ENCODE measurements at regions of chr6 and their contacts with region 1.

Region 1: DNA sequence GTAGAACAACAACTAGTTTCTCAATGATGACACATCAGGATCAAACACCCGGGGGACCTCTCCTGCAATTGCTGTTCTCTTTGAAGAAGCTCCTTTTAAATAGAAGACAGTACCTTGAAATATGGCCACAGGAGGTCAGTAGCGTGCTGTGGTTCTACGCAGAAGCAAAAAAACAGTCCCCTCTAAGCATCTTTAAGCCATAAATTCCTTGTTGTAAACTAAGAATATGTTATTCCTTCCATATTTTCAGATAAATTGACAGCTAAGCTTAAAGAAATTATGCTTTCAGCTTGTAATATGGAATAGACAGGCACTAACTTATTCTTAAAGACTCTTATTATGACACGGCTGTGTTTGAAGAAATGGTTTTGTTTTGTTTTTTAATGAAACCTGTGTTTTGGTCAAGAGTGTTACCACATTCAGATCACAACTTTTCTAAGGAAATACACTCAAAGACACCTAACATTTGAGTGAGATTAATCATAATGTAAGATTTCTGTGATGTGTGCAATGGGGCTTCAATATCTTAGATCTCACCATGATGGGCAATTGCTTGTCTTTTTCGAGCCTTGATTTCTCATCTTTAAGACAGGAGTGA is 49.7 kb upstream of the IL20RA start:
- DNase-seq: peak; percentile 38
- H3K4me3 Mint-ChIP-seq: no peak overlapping the region
- H3K27ac Mint-ChIP-seq: no peak overlapping the region
- H3K4me1 Mint-ChIP-seq: peaks cover 57% of the 10 kb centered on the region
- H3K27me3 Mint-ChIP-seq: no peaks in the 10 kb centered on the region

Region 2: GRCh38 chr6:137033828-137034227 is 60.7 kb before region 1 on chr6:
- intact Hi-C with region 1: loop called (anchors 2 kb)
- DNase-seq: peak; percentile 61
- H3K4me3 Mint-ChIP-seq: no peak overlapping the region
- H3K27ac Mint-ChIP-seq: peak overlapping the region; percentile 20
- H3K4me1 Mint-ChIP-seq: peaks cover 19% of the 10 kb centered on the region
- H3K27me3 Mint-ChIP-seq: peaks cover 54% of the 10 kb centered on the region

Region 3: DNA sequence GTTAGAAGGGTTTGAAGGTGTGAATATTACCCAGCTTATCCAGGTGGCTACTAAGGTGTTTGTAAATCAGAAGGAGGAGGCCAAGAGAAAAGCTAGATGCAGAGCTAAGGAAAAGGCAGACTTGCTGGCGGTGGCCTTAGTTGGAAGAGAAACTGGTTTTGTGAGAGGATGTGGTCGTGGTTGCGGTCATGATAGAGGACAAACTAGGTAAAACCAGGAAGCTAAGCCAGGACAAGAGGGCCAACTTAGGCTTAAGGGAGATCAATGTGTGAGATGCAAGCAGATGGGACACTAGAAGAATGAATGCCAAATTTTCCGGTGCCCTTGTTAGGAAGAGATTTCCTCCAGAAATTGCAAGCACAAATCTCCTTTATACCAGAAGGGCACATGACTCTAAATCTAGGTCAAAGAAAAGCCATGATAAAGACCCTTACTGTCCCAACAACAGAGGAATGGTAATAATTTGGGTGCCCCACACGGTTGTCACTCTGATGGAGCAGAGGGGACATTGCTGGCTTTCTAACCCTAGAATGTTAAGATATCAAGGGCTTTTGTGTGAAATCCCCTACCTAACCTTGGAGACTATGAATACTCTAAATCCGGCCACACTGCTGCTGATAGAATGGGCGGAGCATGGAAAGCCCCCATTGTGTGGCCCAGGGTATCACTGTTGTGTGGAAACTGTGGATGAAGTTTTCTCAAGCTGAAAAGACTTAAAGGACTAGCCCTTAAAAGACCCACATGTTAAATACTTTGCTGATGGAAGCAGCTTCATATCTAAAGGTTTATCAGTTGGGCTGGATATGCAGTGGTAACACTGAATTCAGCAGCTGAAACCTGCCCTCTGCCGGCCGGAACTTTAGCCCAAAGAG is 71.1 kb after region 1 on chr6:
- intact Hi-C with region 1: loop called (anchors 1 kb)
- DNase-seq: peak; percentile 59
- H3K4me3 Mint-ChIP-seq: peak overlapping the region; percentile 30
- H3K27ac Mint-ChIP-seq: peak overlapping the region; percentile 64
- H3K4me1 Mint-ChIP-seq: peaks cover 59% of the 10 kb centered on the region
- H3K27me3 Mint-ChIP-seq: no peaks in the 10 kb centered on the region

Region 4: DNA sequence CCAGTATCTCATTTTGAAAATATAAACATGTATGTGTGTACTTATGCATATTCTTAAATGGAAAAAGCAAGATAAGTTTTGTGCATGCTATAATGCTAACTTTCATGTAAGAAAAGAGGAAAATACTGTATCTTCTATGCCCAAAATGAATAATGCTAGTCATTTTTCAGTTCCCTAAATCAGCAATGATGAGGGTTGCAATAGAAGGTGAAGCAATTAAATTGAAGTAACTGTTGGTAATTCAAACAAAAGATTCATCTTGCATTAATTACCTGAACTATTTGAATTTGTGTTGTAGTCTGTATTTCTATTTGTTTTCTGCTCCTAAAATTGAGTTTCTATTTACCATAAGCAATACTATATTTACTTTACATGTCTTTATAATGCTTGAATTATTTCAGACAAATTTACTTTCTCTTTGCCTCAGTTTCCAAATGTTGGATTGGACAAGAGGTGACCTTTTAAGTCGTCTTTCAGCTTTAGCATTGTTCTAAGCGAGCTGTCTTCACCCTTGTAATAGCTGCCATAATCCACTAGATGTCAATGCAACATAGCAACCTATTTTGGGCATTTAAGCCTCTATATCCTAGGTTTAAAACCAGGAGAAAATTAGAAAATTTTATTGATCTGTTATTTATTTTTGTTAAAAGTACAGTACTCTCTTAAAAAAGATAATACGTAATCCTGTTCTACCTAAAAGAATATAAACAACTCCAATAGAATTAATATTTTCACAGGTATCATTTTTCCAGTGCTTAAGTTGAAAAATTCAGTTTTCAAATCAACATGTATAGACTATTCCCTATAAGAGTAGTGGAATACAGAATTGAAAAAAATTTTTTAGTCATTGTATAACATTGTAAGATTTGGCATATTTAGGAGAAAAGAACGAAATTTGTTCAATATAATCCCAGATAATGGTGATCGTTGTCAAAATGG is 177.0 kb after region 1 on chr6:
- intact Hi-C with region 1: loop called (anchors 1 kb)
- DNase-seq: no peak
- H3K4me3 Mint-ChIP-seq: no peak overlapping the region
- H3K27ac Mint-ChIP-seq: no peak overlapping the region
- H3K4me1 Mint-ChIP-seq: peaks cover 13% of the 10 kb centered on the region
- H3K27me3 Mint-ChIP-seq: peaks cover 31% of the 10 kb centered on the region

Region 5: DNA sequence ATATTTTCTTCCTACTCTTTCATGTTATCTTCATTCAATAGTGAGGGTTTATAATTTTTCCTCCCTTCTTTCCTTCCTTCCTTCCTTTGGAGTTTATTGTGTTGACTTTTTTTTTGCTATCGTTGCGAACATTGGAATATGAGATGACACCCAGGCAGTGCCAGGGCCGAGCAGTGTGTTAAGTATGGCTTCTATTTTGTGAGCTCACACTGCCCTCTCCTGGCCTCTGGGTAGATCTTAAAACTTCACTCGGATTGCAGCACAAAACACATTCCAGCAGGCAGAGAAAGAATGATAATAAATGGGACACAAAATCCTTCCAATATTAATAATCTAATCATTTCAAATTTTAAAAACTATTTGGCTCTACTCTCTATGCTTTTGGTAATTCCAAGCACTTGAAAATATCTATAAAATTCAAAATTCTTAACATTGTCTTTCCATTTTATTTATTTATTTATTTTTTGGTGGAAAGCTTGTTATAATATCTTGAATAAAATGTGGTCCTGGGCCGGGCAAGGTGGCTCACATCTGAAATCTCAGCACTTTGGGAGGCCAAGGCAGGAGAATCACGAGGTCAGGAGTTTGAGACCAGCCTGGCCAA is 547.1 kb after region 1 on chr6:
- intact Hi-C with region 1: loop called (anchors 1 kb)
- DNase-seq: peak; percentile 49
- H3K4me3 Mint-ChIP-seq: no peak overlapping the region
- H3K27ac Mint-ChIP-seq: no peak overlapping the region
- H3K4me1 Mint-ChIP-seq: peaks cover 21% of the 10 kb centered on the region
- H3K27me3 Mint-ChIP-seq: peaks cover 3% of the 10 kb centered on the region

Region 6: GRCh38 chr6:137975188-137975940 is 880.9 kb after region 1 on chr6:
- intact Hi-C with region 1: loop called (anchors 10 kb)
- DNase-seq: peak; percentile 39
- H3K4me3 Mint-ChIP-seq: peak overlapping the region; percentile 69
- H3K27ac Mint-ChIP-seq: peak overlapping the region; percentile 91
- H3K4me1 Mint-ChIP-seq: peaks cover 71% of the 10 kb centered on the region
- H3K27me3 Mint-ChIP-seq: no peaks in the 10 kb centered on the region

Region 7: DNA sequence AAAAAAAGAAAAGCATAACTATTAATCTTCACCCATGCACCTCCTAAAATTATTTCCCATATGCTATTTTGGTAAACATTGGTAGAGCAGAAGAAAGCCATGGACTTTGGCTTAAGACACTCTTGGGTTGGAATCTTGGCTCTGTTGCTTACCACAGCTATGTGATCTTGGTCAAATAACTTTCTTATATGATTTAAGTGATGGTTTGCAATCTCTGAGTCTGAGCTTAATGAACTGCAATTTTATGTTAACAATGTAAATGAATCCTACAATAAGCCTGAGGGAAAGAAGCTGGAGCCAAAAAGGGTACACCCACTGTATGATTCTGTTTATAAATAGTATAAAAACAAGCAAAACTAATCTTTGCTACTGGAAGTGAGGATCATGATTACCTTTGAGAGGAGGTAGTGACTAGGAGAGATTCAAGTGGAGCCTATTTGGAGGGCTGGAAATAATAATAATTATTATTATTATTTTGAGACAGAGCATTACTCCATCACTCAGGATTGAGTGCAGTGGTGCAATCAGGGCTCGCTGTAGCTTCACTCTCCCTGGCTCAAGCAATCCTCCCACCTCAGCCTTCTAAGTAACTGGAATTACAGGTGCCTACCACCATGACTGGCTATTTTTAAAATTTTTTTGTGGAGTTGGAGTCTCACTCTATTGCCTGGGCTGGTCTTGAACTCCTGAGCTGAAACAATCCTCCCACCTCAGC is 1968.6 kb after region 1 on chr6:
- intact Hi-C with region 1: no loop called
- DNase-seq: no peak
- H3K4me3 Mint-ChIP-seq: no peak overlapping the region
- H3K27ac Mint-ChIP-seq: no peak overlapping the region
- H3K4me1 Mint-ChIP-seq: peaks cover 7% of the 10 kb centered on the region
- H3K27me3 Mint-ChIP-seq: peaks cover 1% of the 10 kb centered on the region